Naive thymus-derived CD4-positive, alpha-beta T cell (primary cell): ENCODE measurements at regions of chr17 and their contacts with region 1.

Region 1: GRCh38 chr17:28552246-28552999 is at the start of gene UNC119:
- DNase-seq: peak; percentile 59 to 87 (median 76)
- ATAC-seq: peak; percentile 84
- H3K4me3 ChIP-seq: peak within 1 kb of the TSS; percentile 54
- H3K4me3 Mint-ChIP-seq: peak within 1 kb of the TSS; percentile 85 to 100 (median 92)
- H3K27ac ChIP-seq: peak within 1 kb of the TSS; percentile 89
- H3K27ac Mint-ChIP-seq: peak within 1 kb of the TSS; percentile 91 to 98 (median 95)
- H3K4me1 ChIP-seq: peaks cover 35 to 44% of the 10 kb centered on the region in 2 donors
- H3K4me1 Mint-ChIP-seq: peaks cover 42 to 62% (median 54%) of the 10 kb centered on the region in 7 donors
- H3K27me3 ChIP-seq: no peaks in the 10 kb centered on the region
- H3K27me3 Mint-ChIP-seq: no peaks in the 10 kb centered on the region
- total RNA-seq, gene UNC119: 40.6 to 108 (median 90.2) TPM

Region 2: GRCh38 chr17:28041068-28041843 is 511.2 kb before region 1 on chr17:
- CTCF ChIA-PET with region 1: no interaction called
- POLR2A ChIA-PET with region 1: no interaction called
- intact Hi-C with region 1: loop called in 1 of 2 experiments (anchors 5 kb)
- DNase-seq: peak; percentile 94 to 99 (median 99)
- ATAC-seq: peak; percentile 96
- H3K4me3 ChIP-seq: peak overlapping the region; percentile 45
- H3K4me3 Mint-ChIP-seq: peak overlapping the region; percentile 82 to 92 (median 88)
- H3K27ac ChIP-seq: peak overlapping the region; percentile 71
- H3K27ac Mint-ChIP-seq: peak overlapping the region; percentile 75 to 93 (median 88)
- H3K4me1 ChIP-seq: peaks cover 28 to 40% of the 10 kb centered on the region in 2 donors
- H3K4me1 Mint-ChIP-seq: peaks cover 35 to 65% (median 60%) of the 10 kb centered on the region in 7 donors
- H3K27me3 ChIP-seq: no peaks in the 10 kb centered on the region
- H3K27me3 Mint-ChIP-seq: peaks cover 0 to 16% (median 0%) of the 10 kb centered on the region in 5 donors

Region 3: DNA sequence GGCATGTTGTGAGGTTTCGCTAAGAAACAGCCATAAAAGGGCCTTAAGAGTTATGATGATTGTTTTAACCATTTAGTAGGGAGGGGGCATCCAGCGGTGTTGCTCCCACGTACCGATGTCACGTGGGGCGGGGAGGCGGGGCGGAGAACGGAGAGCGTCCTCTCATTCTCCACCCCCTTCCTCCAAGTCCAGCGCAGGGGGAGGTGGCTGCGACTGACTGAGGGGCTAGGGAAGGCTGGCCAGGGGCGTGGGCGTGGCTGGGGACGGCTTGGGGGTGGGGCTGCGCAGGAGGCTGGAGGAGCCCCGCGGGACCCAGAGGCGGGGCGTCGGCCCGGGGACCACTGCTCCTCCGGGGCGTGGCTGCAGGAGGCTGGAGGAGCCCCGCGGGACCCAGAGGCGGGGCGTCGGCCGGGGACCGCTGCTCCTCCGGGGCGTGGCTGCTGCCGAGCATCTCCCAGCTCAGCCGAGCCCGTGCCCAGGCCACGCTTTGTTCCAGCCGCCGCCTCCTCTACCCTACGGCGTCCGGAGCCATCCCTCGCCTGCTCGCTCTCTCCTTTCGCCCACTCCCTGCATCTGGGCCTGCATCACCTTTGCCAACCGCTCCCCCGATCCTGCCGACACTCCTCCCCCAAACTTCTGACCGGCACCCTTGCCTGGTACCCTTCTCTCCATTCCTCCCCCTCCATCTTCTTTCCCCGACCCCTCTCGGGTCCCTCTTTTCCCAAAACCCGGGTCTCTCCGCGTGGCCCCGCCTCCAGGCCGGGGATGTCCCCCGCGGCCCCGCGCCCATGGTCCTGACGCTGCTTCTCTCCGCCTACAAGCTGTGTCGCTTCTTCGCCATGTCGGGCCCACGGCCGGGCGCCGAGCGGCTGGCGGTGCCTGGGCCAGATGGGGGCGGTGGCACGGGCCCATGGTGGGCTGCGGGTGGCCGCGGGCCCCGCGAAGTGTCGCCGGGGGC is 180.9 kb before region 1 on chr17 and contains the start of gene SARM1:
- CTCF ChIA-PET with region 1: no interaction called
- POLR2A ChIA-PET with region 1: no interaction called
- intact Hi-C with region 1: loop called in 1 of 2 experiments (anchors 5 kb)
- DNase-seq: peak; percentile 52 to 90 (median 64)
- ATAC-seq: peak; percentile 91
- H3K4me3 ChIP-seq: peak within 1 kb of the TSS; percentile 78
- H3K4me3 Mint-ChIP-seq: peak within 1 kb of the TSS; percentile 88 to 98 (median 94)
- H3K27ac ChIP-seq: peak within 1 kb of the TSS; percentile 88
- H3K27ac Mint-ChIP-seq: peak within 1 kb of the TSS; percentile 66 to 97 (median 93)
- H3K4me1 ChIP-seq: peaks cover 9 to 11% of the 10 kb centered on the region in 2 donors
- H3K4me1 Mint-ChIP-seq: peaks cover 10 to 25% (median 18%) of the 10 kb centered on the region in 7 donors
- H3K27me3 ChIP-seq: no peaks in the 10 kb centered on the region
- H3K27me3 Mint-ChIP-seq: no peaks in the 10 kb centered on the region
- total RNA-seq, gene SARM1: 21.8 to 34.1 (median 27.2) TPM

Region 4: DNA sequence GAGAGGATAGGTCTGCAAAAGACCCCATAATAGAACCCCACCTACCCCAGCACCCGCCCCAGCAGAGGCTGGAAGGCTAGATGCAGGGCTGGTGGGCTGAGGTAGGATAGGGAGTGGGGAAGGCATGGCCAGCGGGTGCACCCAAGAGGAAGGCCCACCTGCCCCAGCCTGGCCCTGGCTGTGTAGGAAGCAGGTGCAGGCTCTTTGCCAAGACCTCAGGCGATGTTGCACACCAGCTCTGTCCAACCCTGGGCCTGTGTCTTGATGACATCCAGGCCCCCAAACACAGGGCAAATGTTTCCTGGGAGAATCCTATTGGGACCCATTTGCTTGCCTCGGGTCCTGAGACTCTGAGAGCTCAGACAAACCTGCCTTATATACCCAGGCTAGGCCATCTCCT is 12.2 kb before region 1 on chr17:
- CTCF ChIA-PET with region 1: interaction called, 5 read pairs
- POLR2A ChIA-PET with region 1: interaction called, 4 read pairs
- intact Hi-C with region 1: loop called in 1 of 2 experiments (anchors 1 kb)
- DNase-seq: no peak
- ATAC-seq: no peak
- H3K4me3 ChIP-seq: no peak overlapping the region
- H3K4me3 Mint-ChIP-seq: no peak overlapping the region
- H3K27ac ChIP-seq: no peak overlapping the region
- H3K27ac Mint-ChIP-seq: peak overlapping the region in 1 of 9 donors; percentile 13
- H3K4me1 ChIP-seq: no peaks in the 10 kb centered on the region
- H3K4me1 Mint-ChIP-seq: peaks cover 0 to 5% (median 0%) of the 10 kb centered on the region in 7 donors
- H3K27me3 ChIP-seq: no peaks in the 10 kb centered on the region
- H3K27me3 Mint-ChIP-seq: no peaks in the 10 kb centered on the region

Region 5: GRCh38 chr17:28576758-28577465 is 24.5 kb after region 1 on chr17 and contains the start of gene ALDOC:
- CTCF ChIA-PET with region 1: interaction called, 4 read pairs
- POLR2A ChIA-PET with region 1: interaction called, 102 read pairs
- intact Hi-C with region 1: loop called (anchors 1 kb)
- DNase-seq: peak; percentile 95 to 99 (median 98)
- ATAC-seq: peak; percentile 100
- H3K4me3 ChIP-seq: peak within 1 kb of the TSS; percentile 50
- H3K4me3 Mint-ChIP-seq: peak within 1 kb of the TSS; percentile 83 to 96 (median 86)
- H3K27ac ChIP-seq: peak within 1 kb of the TSS; percentile 52
- H3K27ac Mint-ChIP-seq: peak within 1 kb of the TSS; percentile 79 to 95 (median 89)
- H3K4me1 ChIP-seq: peaks cover 19 to 23% of the 10 kb centered on the region in 2 donors
- H3K4me1 Mint-ChIP-seq: peaks cover 20 to 70% (median 38%) of the 10 kb centered on the region in 7 donors
- H3K27me3 ChIP-seq: no peaks in the 10 kb centered on the region
- H3K27me3 Mint-ChIP-seq: no peaks in the 10 kb centered on the region
- total RNA-seq, gene ALDOC: 24.5 to 159 (median 40.1) TPM

Region 6: GRCh38 chr17:28612936-28613872 is 60.8 kb after region 1 on chr17:
- CTCF ChIA-PET with region 1: interaction called, 13 read pairs
- POLR2A ChIA-PET with region 1: interaction called, 3 read pairs
- intact Hi-C with region 1: loop called in 1 of 2 experiments (anchors 1 kb)
- DNase-seq: peak in 7 of 9 donors; percentile 27 to 45 (median 41)
- ATAC-seq: peak; percentile 70
- H3K4me3 ChIP-seq: no peak overlapping the region
- H3K4me3 Mint-ChIP-seq: no peak overlapping the region
- H3K27ac ChIP-seq: no peak overlapping the region
- H3K27ac Mint-ChIP-seq: peak overlapping the region in 6 of 9 donors; percentile 38 to 75 (median 64)
- H3K4me1 ChIP-seq: no peaks in the 10 kb centered on the region
- H3K4me1 Mint-ChIP-seq: peaks cover 6 to 19% (median 10%) of the 10 kb centered on the region in 7 donors
- H3K27me3 ChIP-seq: no peaks in the 10 kb centered on the region
- H3K27me3 Mint-ChIP-seq: no peaks in the 10 kb centered on the region